ENCODE measurements at regions of chr1 and their contacts with region 1.

Region 1: GRCh38 chr1:154974063-154974807 is at the start of gene CKS1B:
- DNase-seq: peak; percentile 97
- total RNA-seq, gene CKS1B: 16.0 TPM

Region 2: GRCh38 chr1:154936555-154937084 is 37.6 kb before region 1 on chr1 and contains the start of gene PMVK:
- intact Hi-C with region 1: loop called (anchors 2 kb)
- DNase-seq: peak; percentile 99
- total RNA-seq, gene PMVK: 30.9 TPM

Region 3: DNA sequence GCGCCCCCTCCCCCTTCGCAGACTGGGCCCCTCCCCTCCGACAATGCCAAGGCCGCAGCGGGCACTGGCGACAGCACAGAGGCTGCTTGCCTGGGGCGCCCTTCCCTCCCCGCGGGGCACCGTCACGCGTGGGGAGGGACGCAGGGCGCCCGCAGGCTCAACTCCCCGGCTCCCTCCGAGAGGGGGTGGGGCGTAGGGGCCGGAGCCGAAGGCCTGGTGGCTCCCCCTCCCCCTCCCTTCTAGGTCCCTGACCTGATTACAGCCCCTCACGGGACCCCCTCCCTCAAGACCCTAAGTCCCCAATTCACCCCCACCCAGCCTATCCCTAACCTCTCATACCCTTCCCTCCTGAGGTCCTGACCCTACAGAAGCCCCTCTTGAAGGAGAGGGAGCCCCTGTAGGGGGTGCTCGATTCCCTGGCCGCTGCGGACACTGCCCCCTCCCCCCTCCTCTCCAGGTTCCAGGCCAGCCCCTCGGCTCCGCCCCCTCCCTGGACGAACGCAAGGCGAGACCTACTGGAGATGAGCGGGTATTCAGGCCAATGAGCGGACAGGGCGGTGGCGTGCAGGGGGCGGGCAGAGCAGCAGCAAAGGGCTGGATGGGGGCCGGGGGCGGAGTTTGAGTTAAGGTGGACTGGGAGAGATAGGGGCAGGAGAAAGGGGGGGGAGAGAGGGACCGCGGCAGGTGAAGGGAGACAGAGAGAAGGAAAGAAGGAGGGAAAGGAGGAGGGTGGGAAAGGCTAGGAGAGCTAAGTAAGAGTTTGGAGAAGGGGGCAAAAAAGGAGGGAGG is 27.6 kb after region 1 on chr1:
- intact Hi-C with region 1: loop called (anchors 2 kb)
- DNase-seq: peak; percentile 100

Region 4: DNA sequence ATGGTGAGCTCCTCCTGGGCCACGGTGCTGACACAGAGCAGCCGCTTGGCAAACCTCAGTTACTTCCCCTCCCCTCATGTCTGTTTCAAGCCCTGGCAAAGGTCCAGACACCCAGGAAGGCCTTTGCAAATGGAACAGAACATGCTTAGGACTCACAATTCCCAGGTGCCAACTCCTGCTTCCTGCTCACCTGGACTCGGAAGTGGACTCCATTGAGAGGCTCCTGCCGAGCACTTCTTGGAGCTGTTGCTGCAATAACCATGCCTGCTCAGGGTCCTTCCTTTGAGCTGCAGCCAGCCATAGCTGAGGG is 48.6 kb after region 1 on chr1:
- intact Hi-C with region 1: no loop called
- DNase-seq: no peak